ENCODE measurements at regions of chr11 and their contacts with region 1.

Region 1: GRCh38 chr11:63553741-63554151 is 9.4 kb downstream of the PLAAT2 start:
- DNase-seq: peak; percentile 45 to 84 (median 70)
- H3K4me3 ChIP-seq: peak overlapping the region; percentile 21
- H3K4me3 Mint-ChIP-seq: peak overlapping the region; percentile 44 to 95 (median 91)
- H3K27ac ChIP-seq: peak overlapping the region; percentile 70
- H3K27ac Mint-ChIP-seq: peak overlapping the region; percentile 88 to 99 (median 97)
- H3K4me1 ChIP-seq: peaks cover 43% of the 10 kb centered on the region
- H3K4me1 Mint-ChIP-seq: peaks cover 55 to 72% (median 70%) of the 10 kb centered on the region in 3 donors
- H3K27me3 ChIP-seq: no peaks in the 10 kb centered on the region
- H3K27me3 Mint-ChIP-seq: no peaks in the 10 kb centered on the region

Region 2: GRCh38 chr11:63536669-63537292 is 17.0 kb before region 1 on chr11 and contains the start of gene PLAAT4:
- CTCF ChIA-PET with region 1: interaction called, 37 read pairs
- POLR2A ChIA-PET with region 1: interaction called, 38 read pairs
- DNase-seq: peak in 4 of 5 donors; percentile 31 to 57 (median 54)
- H3K4me3 ChIP-seq: peak within 1 kb of the TSS; percentile 78
- H3K4me3 Mint-ChIP-seq: peak within 1 kb of the TSS; percentile 91 to 99 (median 98)
- H3K27ac ChIP-seq: peak within 1 kb of the TSS; percentile 69
- H3K27ac Mint-ChIP-seq: peak within 1 kb of the TSS; percentile 90 to 100 (median 98)
- H3K4me1 ChIP-seq: peaks cover 82% of the 10 kb centered on the region
- H3K4me1 Mint-ChIP-seq: peaks cover 85 to 95% (median 92%) of the 10 kb centered on the region in 3 donors
- H3K27me3 ChIP-seq: no peaks in the 10 kb centered on the region
- H3K27me3 Mint-ChIP-seq: peaks cover 0 to 3% of the 10 kb centered on the region in 2 donors
- total RNA-seq, gene PLAAT4: 20.5 to 21.8 TPM

Region 3: GRCh38 chr11:63573881-63574855 is 20.4 kb after region 1 on chr11:
- CTCF ChIA-PET with region 1: interaction called, 19 read pairs
- POLR2A ChIA-PET with region 1: interaction called, 6 read pairs
- DNase-seq: peak in 4 of 5 donors; percentile 6 to 58 (median 30)
- H3K4me3 ChIP-seq: peak overlapping the region; percentile 40
- H3K4me3 Mint-ChIP-seq: peak overlapping the region; percentile 38 to 92 (median 81)
- H3K27ac ChIP-seq: peak overlapping the region; percentile 19
- H3K27ac Mint-ChIP-seq: peak overlapping the region; percentile 59 to 97 (median 92)
- H3K4me1 ChIP-seq: peaks cover 15% of the 10 kb centered on the region
- H3K4me1 Mint-ChIP-seq: peaks cover 19 to 25% (median 21%) of the 10 kb centered on the region in 3 donors
- H3K27me3 ChIP-seq: no peaks in the 10 kb centered on the region
- H3K27me3 Mint-ChIP-seq: peaks cover 0 to 2% of the 10 kb centered on the region in 2 donors

Measured in CD8-positive, alpha-beta memory T cell (primary cell).